HepG2 (cell line): ENCODE measurements at regions of chr6 and their contacts with region 1.

Region 1: GRCh38 chr6:142301651-142302370 is at the start of gene ADGRG6:
- DNase-seq: peak; percentile 82
- ATAC-seq: peak; percentile 92
- H3K4me3 ChIP-seq: peak within 1 kb of the TSS; percentile 85 to 95 (median 93)
- H3K27ac ChIP-seq: peak within 1 kb of the TSS; percentile 84
- H3K4me1 ChIP-seq: peaks cover 64% of the 10 kb centered on the region
- H3K27me3 ChIP-seq: no peaks in the 10 kb centered on the region; a peak in 1 of 5 replicates
- CTCF ChIP-seq: peak; percentile 84
- EP300 ChIP-seq: 0 out of 4 replicates have a peak, but pooled peaks of 1 of the 2 experiments have one; percentile 26
- POLR2A ChIP-seq: peak; percentile 33 to 87; a peak in 3 of 4 replicates
- RAD21 ChIP-seq: peak; percentile 96
- total RNA-seq, gene ADGRG6: 83.6 and 129 TPM in 2 replicates

Region 2: DNA sequence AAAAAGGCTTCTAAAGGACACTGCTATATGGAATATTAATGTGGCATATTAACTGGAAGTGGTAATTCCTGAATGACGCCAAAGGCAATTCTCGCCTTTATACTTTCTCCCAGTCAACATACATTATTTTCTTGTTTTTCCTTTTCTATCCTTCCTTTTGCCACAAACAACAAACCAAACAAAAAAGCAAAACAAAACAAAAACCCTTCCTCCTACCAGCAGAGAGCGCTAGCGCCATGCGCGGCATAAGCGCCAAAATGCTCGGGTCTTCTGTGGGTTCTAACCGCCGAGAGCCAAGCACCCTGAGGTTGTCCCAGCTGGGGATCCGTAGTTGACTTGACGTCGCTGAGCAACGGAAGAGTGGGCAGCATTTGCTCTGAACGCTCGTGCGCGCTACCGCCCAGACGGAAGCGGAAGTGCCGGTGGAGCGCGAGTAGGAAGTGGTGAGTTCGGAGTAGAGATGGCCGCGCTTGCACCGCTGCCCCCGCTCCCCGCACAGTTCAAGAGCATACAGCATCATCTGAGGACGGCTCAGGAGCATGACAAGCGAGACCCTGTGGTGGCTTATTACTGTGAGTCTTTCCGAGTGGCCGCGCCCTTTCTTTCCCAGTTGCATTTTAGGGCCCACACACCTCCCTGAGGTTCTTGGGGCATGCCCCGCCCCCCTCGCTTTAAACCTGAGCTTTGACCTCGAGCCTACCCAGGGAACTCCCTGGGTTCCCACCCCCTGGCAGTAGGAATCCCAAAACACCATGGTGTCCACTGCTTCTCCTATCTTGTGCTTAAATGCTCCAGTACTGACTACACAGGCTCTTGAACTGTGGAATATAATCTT is 154.8 kb before region 1 on chr6 and contains the starts of genes NMBR and VTA1:
- CTCF ChIA-PET with region 1: no interaction called
- POLR2A ChIA-PET with region 1: interaction called, 4 read pairs
- in situ Hi-C with region 1: no loop called
- intact Hi-C with region 1: loop called (anchors 2 kb)
- DNase-seq: peak; percentile 100
- ATAC-seq: peak; percentile 100
- H3K4me3 ChIP-seq: peak within 1 kb of the TSS; percentile 79 to 91 (median 81)
- H3K27ac ChIP-seq: peak within 1 kb of the TSS; percentile 63
- H3K4me1 ChIP-seq: peaks cover 30% of the 10 kb centered on the region
- H3K27me3 ChIP-seq: no peaks in the 10 kb centered on the region; a peak in 1 of 5 replicates
- CTCF ChIP-seq: peak; percentile 99
- EP300 ChIP-seq: peak in 1 of 2 experiments; percentile 62; a peak in 2 of 4 replicates
- POLR2A ChIP-seq: peak; percentile 97 to 98
- RAD21 ChIP-seq: peak; percentile 93
- total RNA-seq, gene NMBR: not detected in 2 replicates
- total RNA-seq, gene VTA1: 89.1 and 143 TPM in 2 replicates

Region 3: GRCh38 chr6:142255785-142256184 is 46.0 kb before region 1 on chr6:
- CTCF ChIA-PET with region 1: no interaction called
- POLR2A ChIA-PET with region 1: interaction called, 43 read pairs
- in situ Hi-C with region 1: no loop called
- intact Hi-C with region 1: no loop called
- DNase-seq: no peak
- ATAC-seq: no peak
- H3K4me3 ChIP-seq: no peak overlapping the region
- H3K27ac ChIP-seq: no peak overlapping the region
- H3K4me1 ChIP-seq: peaks cover 69% of the 10 kb centered on the region
- H3K27me3 ChIP-seq: no peaks in the 10 kb centered on the region
- CTCF ChIP-seq: no peak
- EP300 ChIP-seq: no peak
- POLR2A ChIP-seq: no peak
- RAD21 ChIP-seq: no peak

Region 4: GRCh38 chr6:142279350-142280180 is 22.2 kb before region 1 on chr6:
- CTCF ChIA-PET with region 1: no interaction called
- POLR2A ChIA-PET with region 1: interaction called, 58 read pairs
- in situ Hi-C with region 1: no loop called
- intact Hi-C with region 1: loop called (anchors 2 kb)
- DNase-seq: peak; percentile 81
- ATAC-seq: peak; percentile 76
- H3K4me3 ChIP-seq: peak overlapping the region in 1 of 3 experiments; percentile 6; a peak in 1 of 6 replicates
- H3K27ac ChIP-seq: peak overlapping the region; percentile 46
- H3K4me1 ChIP-seq: peaks cover 37% of the 10 kb centered on the region
- H3K27me3 ChIP-seq: no peaks in the 10 kb centered on the region
- CTCF ChIP-seq: no peak
- EP300 ChIP-seq: peak in 1 of 2 experiments; percentile 80; a peak in 2 of 4 replicates
- POLR2A ChIP-seq: no peak
- RAD21 ChIP-seq: no peak

Region 5: GRCh38 chr6:142316791-142317368 is 15.1 kb after region 1 on chr6:
- CTCF ChIA-PET with region 1: no interaction called
- POLR2A ChIA-PET with region 1: interaction called, 17 read pairs
- in situ Hi-C with region 1: no loop called
- intact Hi-C with region 1: no loop called
- DNase-seq: no peak
- ATAC-seq: peak; percentile 58
- H3K4me3 ChIP-seq: no peak overlapping the region
- H3K27ac ChIP-seq: peak overlapping the region; percentile 17
- H3K4me1 ChIP-seq: peaks cover 69% of the 10 kb centered on the region
- H3K27me3 ChIP-seq: no peaks in the 10 kb centered on the region
- CTCF ChIP-seq: no peak
- EP300 ChIP-seq: 0 out of 4 replicates have a peak, but pooled peaks of 1 of the 2 experiments have one; percentile 17
- POLR2A ChIP-seq: no peak
- RAD21 ChIP-seq: no peak

Region 6: DNA sequence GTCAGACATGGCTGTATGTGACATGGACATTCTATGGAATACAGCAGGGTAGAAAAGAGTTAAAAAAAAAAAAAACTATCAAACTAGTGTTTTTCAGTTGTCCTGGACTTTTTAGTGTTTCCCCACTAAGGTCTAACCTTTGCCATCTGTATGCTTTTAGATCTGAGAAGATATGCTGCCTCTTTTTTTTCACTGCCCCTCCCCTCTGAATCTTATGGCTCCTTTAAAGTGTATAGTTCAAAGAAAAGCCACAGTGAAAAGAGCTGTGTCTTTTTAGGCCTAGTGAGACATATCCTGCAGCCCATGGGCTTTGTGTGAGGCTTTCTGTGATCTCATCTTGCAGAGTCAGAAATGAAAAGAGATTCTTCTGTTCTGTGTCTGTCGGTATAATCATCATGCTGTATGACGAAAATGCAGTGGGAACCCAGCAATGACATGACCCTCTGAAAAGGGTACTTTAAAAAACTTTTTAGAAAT is 29.3 kb after region 1 on chr6:
- CTCF ChIA-PET with region 1: no interaction called
- POLR2A ChIA-PET with region 1: interaction called, 13 read pairs
- in situ Hi-C with region 1: no loop called
- intact Hi-C with region 1: loop called (anchors 1 kb)
- DNase-seq: peak; percentile 100
- ATAC-seq: peak; percentile 97
- H3K4me3 ChIP-seq: peak overlapping the region; percentile 21 to 36 (median 34); a peak in 4 of 6 replicates
- H3K27ac ChIP-seq: peak overlapping the region; percentile 80
- H3K4me1 ChIP-seq: peaks cover 98% of the 10 kb centered on the region
- H3K27me3 ChIP-seq: no peaks in the 10 kb centered on the region
- CTCF ChIP-seq: no peak
- EP300 ChIP-seq: peak; percentile 46 to 99; a peak in 3 of 4 replicates
- POLR2A ChIP-seq: no peak
- RAD21 ChIP-seq: peak; percentile 27; the same call in 1 of the 2 replicates

Region 7: GRCh38 chr6:142378138-142378875 is 76.5 kb after region 1 on chr6:
- CTCF ChIA-PET with region 1: no interaction called
- POLR2A ChIA-PET with region 1: interaction called, 15 read pairs
- in situ Hi-C with region 1: loop called (anchors 5 kb)
- intact Hi-C with region 1: no loop called
- DNase-seq: peak; percentile 87
- ATAC-seq: peak; percentile 11; the same call in 2 of the 3 replicates
- H3K4me3 ChIP-seq: no peak overlapping the region
- H3K27ac ChIP-seq: peak overlapping the region; percentile 73
- H3K4me1 ChIP-seq: peaks cover 77% of the 10 kb centered on the region
- H3K27me3 ChIP-seq: no peaks in the 10 kb centered on the region
- CTCF ChIP-seq: no peak
- EP300 ChIP-seq: peak in 1 of 2 experiments; percentile 77; a peak in 2 of 4 replicates
- POLR2A ChIP-seq: no peak
- RAD21 ChIP-seq: no peak

Region 8: DNA sequence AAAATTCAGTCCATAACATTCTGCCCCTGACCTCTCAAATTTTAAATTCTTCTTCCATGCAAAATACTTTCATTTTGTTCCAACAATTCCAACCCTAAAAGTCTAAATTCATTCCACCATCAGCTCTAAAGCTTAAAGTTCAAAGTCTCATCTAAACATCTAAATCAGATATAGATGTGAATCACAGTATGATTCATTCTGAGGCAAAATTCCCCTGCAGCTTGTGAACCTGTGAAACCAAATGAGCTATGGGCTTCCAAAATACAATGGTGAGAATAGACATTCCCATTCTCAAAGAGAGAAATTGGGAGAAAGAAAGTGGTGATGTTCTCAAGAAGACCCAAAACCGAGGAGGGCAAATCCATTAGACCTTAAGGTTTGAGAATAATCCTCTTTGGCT is 333.3 kb after region 1 on chr6:
- CTCF ChIA-PET with region 1: no interaction called
- POLR2A ChIA-PET with region 1: no interaction called
- in situ Hi-C with region 1: no loop called
- intact Hi-C with region 1: no loop called
- DNase-seq: no peak
- ATAC-seq: no peak
- H3K4me3 ChIP-seq: no peak overlapping the region
- H3K27ac ChIP-seq: no peak overlapping the region
- H3K4me1 ChIP-seq: peaks cover 12% of the 10 kb centered on the region
- H3K27me3 ChIP-seq: no peaks in the 10 kb centered on the region; a peak in 1 of 5 replicates
- CTCF ChIP-seq: no peak
- EP300 ChIP-seq: no peak
- POLR2A ChIP-seq: no peak
- RAD21 ChIP-seq: no peak